H1 (cell line): ENCODE measurements at regions of chr14 and their contacts with region 1.

Region 1: GRCh38 chr14:91350813-91351511 is 66.7 kb downstream of the CCDC88C start:
- DNase-seq: no peak
- H3K4me3 ChIP-seq: no peak overlapping the region
- H3K27ac ChIP-seq: no peak overlapping the region
- H3K4me1 ChIP-seq: peaks cover 6 to 29% (median 15%) of the 10 kb centered on the region in 4 experiments
- H3K27me3 ChIP-seq: no peaks in the 10 kb centered on the region
- CTCF ChIP-seq: no peak
- EP300 ChIP-seq: no peak
- POLR2A ChIP-seq: no peak
- RAD21 ChIP-seq: no peak

Region 2: DNA sequence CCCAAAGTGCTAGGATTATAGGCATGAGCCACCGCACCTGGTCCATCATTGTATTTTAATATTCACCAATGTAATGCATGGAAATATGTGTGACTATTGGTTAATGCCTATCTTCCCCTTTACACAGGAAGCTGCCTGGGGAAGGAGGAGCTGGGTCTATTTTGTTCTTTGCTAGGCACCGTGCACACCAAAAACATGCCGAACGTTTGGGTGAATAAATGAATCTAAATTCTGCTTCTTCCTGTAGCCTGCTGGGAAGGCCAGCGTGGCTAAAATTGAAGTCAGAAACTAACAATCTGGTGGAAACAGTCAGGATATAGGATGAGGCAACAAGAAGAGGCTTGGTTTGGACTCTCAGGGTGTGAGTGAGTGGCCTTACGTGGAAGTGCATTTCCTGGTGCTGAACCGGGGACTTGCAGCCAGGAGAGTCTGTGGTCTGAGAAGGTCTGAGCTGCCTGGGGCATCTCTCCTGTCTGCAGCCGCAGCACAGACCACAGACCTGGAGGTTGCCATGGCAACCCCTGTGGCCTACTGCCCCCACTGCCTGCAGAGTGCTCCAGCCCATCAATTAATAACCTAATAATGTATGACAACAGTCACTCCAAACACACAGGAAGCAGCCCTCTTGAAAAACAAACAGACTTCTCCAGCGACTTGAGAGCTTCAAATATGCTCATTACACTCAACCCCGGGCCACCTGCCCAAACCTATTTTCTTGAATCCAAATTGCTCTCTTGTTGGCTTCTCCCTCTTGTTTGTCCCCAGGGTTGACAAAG is 100.9 kb before region 1 on chr14:
- CTCF ChIA-PET with region 1: no interaction called
- POLR2A ChIA-PET with region 1: no interaction called
- DNase-seq: no peak
- H3K4me3 ChIP-seq: no peak overlapping the region
- H3K27ac ChIP-seq: no peak overlapping the region
- H3K4me1 ChIP-seq: peaks cover 0 to 10% (median 8%) of the 10 kb centered on the region in 4 experiments; a peak in 6 of 7 replicates
- H3K27me3 ChIP-seq: peaks cover 0 to 16% (median 9%) of the 10 kb centered on the region in 4 experiments; a peak in 6 of 7 replicates
- CTCF ChIP-seq: no peak
- EP300 ChIP-seq: no peak
- POLR2A ChIP-seq: no peak
- RAD21 ChIP-seq: no peak

Region 3: GRCh38 chr14:91332151-91332985 is 18.6 kb before region 1 on chr14:
- CTCF ChIA-PET with region 1: interaction called, 135 read pairs
- POLR2A ChIA-PET with region 1: interaction called, 3 read pairs
- DNase-seq: no peak
- H3K4me3 ChIP-seq: no peak overlapping the region
- H3K27ac ChIP-seq: no peak overlapping the region; the same call in 1 of the 2 replicates
- H3K4me1 ChIP-seq: no peaks in the 10 kb centered on the region
- H3K27me3 ChIP-seq: no peaks in the 10 kb centered on the region
- CTCF ChIP-seq: no peak
- EP300 ChIP-seq: no peak
- POLR2A ChIP-seq: no peak
- RAD21 ChIP-seq: no peak

Region 4: DNA sequence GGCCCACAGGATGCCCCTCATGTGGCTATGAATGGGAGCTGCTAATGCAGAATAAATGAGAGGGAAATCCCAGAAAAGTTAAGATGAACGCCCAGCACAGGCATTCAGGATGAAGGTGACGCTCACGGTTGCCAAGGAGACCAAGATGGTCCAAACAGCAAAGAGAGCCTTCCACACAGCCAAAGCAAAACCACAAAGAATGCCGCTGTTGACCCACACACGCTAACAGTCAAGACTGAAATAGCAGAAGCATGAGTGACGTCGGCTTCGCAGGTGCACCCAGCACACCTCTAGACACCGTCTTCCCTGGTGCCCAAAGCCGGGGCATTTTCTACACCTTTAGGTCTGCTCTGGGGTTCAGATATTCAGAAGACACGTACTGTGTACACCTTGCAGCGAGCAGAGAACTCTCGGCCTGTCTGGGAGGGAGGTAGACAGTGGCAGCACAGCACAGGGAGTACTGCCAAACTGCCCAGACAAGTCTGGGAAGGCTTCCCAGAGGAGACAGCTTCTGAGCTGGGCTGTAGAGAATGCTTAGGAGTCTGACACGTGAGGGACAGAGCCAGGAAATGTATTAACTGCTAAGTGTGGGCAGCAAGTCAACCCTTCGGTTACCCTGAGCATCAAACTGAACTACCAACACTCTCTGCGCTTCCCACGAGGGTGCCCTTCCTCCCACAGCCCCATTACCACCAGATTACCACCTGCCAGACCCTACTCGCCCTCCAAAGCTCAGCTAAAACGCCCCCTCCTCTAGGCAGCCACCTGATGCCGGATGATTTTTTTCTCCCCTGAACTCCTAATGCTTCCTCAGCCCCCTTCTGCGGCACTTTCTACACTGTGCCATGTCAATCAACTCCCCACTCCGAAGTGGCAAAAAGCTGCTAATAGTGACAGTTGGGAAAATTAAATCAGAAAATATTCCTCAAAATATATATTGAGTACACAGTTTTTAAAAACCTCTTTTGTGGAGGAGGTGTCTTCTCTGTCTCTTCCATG is 16.5 kb after region 1 on chr14:
- CTCF ChIA-PET with region 1: interaction called, 135 read pairs
- POLR2A ChIA-PET with region 1: interaction called, 4 read pairs
- DNase-seq: no peak
- H3K4me3 ChIP-seq: no peak overlapping the region
- H3K27ac ChIP-seq: peak overlapping the region; percentile 29; the same call in 1 of the 2 replicates
- H3K4me1 ChIP-seq: peaks cover 7 to 29% (median 17%) of the 10 kb centered on the region in 4 experiments
- H3K27me3 ChIP-seq: no peaks in the 10 kb centered on the region
- CTCF ChIP-seq: no peak
- EP300 ChIP-seq: no peak
- POLR2A ChIP-seq: no peak
- RAD21 ChIP-seq: no peak

Region 5: GRCh38 chr14:91388551-91388975 is 37.6 kb after region 1 on chr14:
- CTCF ChIA-PET with region 1: interaction called, 14 read pairs
- POLR2A ChIA-PET with region 1: no interaction called
- DNase-seq: no peak
- H3K4me3 ChIP-seq: no peak overlapping the region
- H3K27ac ChIP-seq: no peak overlapping the region
- H3K4me1 ChIP-seq: peaks cover 13 to 38% (median 27%) of the 10 kb centered on the region in 4 experiments
- H3K27me3 ChIP-seq: no peaks in the 10 kb centered on the region
- CTCF ChIP-seq: no peak
- EP300 ChIP-seq: no peak
- POLR2A ChIP-seq: no peak
- RAD21 ChIP-seq: no peak

Region 6: DNA sequence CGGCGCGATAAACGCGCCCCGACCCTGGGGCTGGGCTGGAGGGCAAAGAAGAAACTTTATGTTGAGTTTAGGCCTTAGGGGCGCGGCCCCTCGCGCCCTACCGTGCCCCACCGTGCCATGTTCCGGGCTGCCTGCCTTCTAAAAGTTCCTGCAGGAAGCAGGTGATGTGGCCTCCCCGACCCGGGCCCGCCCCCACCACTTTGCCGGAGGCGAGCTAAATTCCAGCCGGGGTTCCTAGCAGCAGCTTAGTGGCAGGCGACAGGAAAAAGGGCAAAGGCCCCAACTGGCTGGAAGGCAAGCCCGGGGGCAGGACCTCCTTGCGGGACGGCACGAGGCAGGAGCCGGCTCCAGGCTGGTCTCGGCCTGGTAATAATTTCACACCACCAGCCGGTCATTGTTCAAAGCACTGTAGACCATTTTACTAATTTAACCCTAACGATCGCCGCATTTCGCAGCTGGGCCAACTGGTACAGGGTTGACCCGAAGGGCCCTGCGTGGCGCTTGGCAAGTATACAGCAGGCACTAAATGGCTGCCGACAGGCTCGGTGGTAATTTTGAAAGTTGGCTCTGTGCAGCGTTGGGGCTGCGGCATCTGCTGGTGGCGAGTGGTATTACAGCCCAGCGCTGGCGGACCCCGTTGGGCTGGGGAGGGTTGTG is 67.6 kb after region 1 on chr14:
- CTCF ChIA-PET with region 1: interaction called, 135 read pairs
- POLR2A ChIA-PET with region 1: interaction called, 3 read pairs
- DNase-seq: peak; percentile 39 to 96
- H3K4me3 ChIP-seq: peak overlapping the region; percentile 35 to 92 (median 63)
- H3K27ac ChIP-seq: no peak overlapping the region
- H3K4me1 ChIP-seq: peaks cover 7 to 26% (median 13%) of the 10 kb centered on the region in 4 experiments; a peak in 6 of 7 replicates
- H3K27me3 ChIP-seq: peaks cover 0 to 6% (median 3%) of the 10 kb centered on the region in 4 experiments; a peak in 2 of 7 replicates
- CTCF ChIP-seq: peak; percentile 90 to 92 (median 91)
- EP300 ChIP-seq: no peak
- POLR2A ChIP-seq: no peak
- RAD21 ChIP-seq: peak; percentile 90 to 91